B cell (primary cell): ENCODE measurements at regions of chr20 and their contacts with region 1.

Region 1: DNA sequence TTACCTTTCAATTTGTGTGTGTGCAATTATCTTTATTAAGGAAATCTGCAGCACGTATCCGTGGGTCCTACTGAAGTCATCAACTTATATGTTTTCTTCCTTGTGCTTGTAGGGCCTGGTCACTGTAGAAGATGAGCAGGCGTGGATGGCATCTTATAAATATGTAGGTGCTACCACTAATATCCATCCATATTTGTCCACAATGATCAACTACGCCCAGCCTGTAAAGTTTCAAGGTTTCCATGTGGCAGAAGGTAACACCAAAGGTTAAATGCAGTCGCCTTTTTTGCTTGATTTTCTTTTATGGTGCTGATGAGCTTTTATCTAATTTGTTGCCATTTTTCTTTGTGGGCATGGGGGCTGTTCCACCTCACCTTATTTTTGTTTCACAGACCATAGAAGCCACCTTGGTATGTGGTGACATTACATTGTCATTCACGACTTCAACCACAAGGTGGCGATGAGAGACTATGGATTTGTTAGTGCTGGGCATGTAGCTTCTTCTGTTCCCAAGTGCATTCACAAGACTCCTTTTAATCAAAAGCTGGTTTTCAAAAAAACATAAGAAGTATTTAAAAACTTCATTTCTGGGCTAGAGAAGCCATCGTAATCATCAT is 106.5 kb upstream of the LAMP5 start:
- DNase-seq: peak; percentile 61
- ATAC-seq: no peak
- H3K4me3 ChIP-seq: no peak overlapping the region
- H3K4me3 Mint-ChIP-seq: no peak overlapping the region
- H3K27ac ChIP-seq: no peak overlapping the region
- H3K27ac Mint-ChIP-seq: no peak overlapping the region
- H3K4me1 ChIP-seq: no peaks in the 10 kb centered on the region
- H3K4me1 Mint-ChIP-seq: peaks cover 7% of the 10 kb centered on the region
- H3K27me3 ChIP-seq: no peaks in the 10 kb centered on the region
- H3K27me3 Mint-ChIP-seq: peaks cover 10% of the 10 kb centered on the region
- CTCF ChIP-seq: peak; percentile 91

Region 2: GRCh38 chr20:9427430-9428291 is 19.7 kb after region 1 on chr20:
- CTCF ChIA-PET with region 1: interaction called, 44 read pairs
- POLR2A ChIA-PET with region 1: no interaction called
- intact Hi-C with region 1: no loop called
- DNase-seq: no peak
- ATAC-seq: no peak
- H3K4me3 ChIP-seq: no peak overlapping the region
- H3K4me3 Mint-ChIP-seq: no peak overlapping the region
- H3K27ac ChIP-seq: no peak overlapping the region
- H3K27ac Mint-ChIP-seq: no peak overlapping the region
- H3K4me1 ChIP-seq: peaks cover 0 to 2% of the 10 kb centered on the region in 2 donors
- H3K4me1 Mint-ChIP-seq: peaks cover 2% of the 10 kb centered on the region
- H3K27me3 ChIP-seq: no peaks in the 10 kb centered on the region
- H3K27me3 Mint-ChIP-seq: no peaks in the 10 kb centered on the region
- CTCF ChIP-seq: no peak

Region 3: GRCh38 chr20:9609887-9610502 is 202.1 kb after region 1 on chr20:
- CTCF ChIA-PET with region 1: interaction called, 20 read pairs
- POLR2A ChIA-PET with region 1: no interaction called
- intact Hi-C with region 1: no loop called
- DNase-seq: peak; percentile 56
- ATAC-seq: no peak
- H3K4me3 ChIP-seq: no peak overlapping the region
- H3K4me3 Mint-ChIP-seq: no peak overlapping the region
- H3K27ac ChIP-seq: no peak overlapping the region
- H3K27ac Mint-ChIP-seq: no peak overlapping the region
- H3K4me1 ChIP-seq: no peaks in the 10 kb centered on the region
- H3K4me1 Mint-ChIP-seq: no peaks in the 10 kb centered on the region
- H3K27me3 ChIP-seq: peaks cover 0 to 17% (median 5%) of the 10 kb centered on the region in 4 experiments
- H3K27me3 Mint-ChIP-seq: peaks cover 13% of the 10 kb centered on the region
- CTCF ChIP-seq: peak; percentile 74

Region 4: GRCh38 chr20:9912858-9913434 is 505.0 kb after region 1 on chr20:
- CTCF ChIA-PET with region 1: interaction called, 10 read pairs
- POLR2A ChIA-PET with region 1: no interaction called
- intact Hi-C with region 1: loop called (anchors 2 kb)
- DNase-seq: peak; percentile 38
- ATAC-seq: no peak
- H3K4me3 ChIP-seq: no peak overlapping the region
- H3K4me3 Mint-ChIP-seq: no peak overlapping the region
- H3K27ac ChIP-seq: no peak overlapping the region
- H3K27ac Mint-ChIP-seq: no peak overlapping the region
- H3K4me1 ChIP-seq: no peaks in the 10 kb centered on the region
- H3K4me1 Mint-ChIP-seq: no peaks in the 10 kb centered on the region
- H3K27me3 ChIP-seq: peaks cover 0 to 10% (median 5%) of the 10 kb centered on the region in 4 experiments
- H3K27me3 Mint-ChIP-seq: peaks cover 21% of the 10 kb centered on the region
- CTCF ChIP-seq: peak; percentile 88

Region 5: GRCh38 chr20:9978397-9979004 is 570.6 kb after region 1 on chr20:
- CTCF ChIA-PET with region 1: no interaction called
- POLR2A ChIA-PET with region 1: no interaction called
- intact Hi-C with region 1: no loop called
- DNase-seq: peak; percentile 73
- ATAC-seq: peak; percentile 70
- H3K4me3 ChIP-seq: no peak overlapping the region
- H3K4me3 Mint-ChIP-seq: no peak overlapping the region
- H3K27ac ChIP-seq: no peak overlapping the region
- H3K27ac Mint-ChIP-seq: no peak overlapping the region
- H3K4me1 ChIP-seq: no peaks in the 10 kb centered on the region
- H3K4me1 Mint-ChIP-seq: no peaks in the 10 kb centered on the region
- H3K27me3 ChIP-seq: peaks cover 0 to 5% (median 0%) of the 10 kb centered on the region in 4 experiments
- H3K27me3 Mint-ChIP-seq: peaks cover 10% of the 10 kb centered on the region
- CTCF ChIP-seq: peak; percentile 82

Region 6: DNA sequence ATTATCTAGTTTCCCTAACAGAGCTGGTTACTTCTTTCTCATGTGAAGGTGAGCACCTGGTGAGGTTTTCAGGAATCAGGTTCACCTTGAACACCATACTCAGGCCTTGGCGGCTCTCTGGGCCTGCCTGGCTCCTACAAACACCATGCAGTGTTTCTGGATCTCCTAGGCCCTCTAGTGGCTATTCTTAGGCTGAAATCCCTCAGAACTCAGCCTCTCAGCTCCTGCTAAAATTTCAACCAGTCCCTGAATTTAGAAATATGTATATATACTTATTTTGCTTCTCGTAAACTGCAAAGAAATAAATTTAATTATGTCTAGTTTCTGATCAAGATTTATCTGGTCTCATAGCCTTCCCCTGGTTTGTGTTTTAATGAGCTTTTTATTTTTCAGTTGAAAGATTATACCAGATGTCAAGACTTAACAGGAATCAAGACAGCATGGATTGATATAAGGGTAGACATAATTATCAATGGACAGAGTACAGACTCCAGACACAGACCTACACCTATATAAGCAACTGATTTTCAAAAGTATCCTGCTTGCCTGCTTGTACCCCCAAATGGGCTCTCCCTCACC is 682.8 kb after region 1 on chr20:
- CTCF ChIA-PET with region 1: interaction called, 18 read pairs
- POLR2A ChIA-PET with region 1: no interaction called
- intact Hi-C with region 1: no loop called
- DNase-seq: peak; percentile 54
- ATAC-seq: no peak
- H3K4me3 ChIP-seq: no peak overlapping the region
- H3K4me3 Mint-ChIP-seq: no peak overlapping the region
- H3K27ac ChIP-seq: no peak overlapping the region
- H3K27ac Mint-ChIP-seq: no peak overlapping the region
- H3K4me1 ChIP-seq: no peaks in the 10 kb centered on the region
- H3K4me1 Mint-ChIP-seq: no peaks in the 10 kb centered on the region
- H3K27me3 ChIP-seq: peaks cover 0 to 4% (median 1%) of the 10 kb centered on the region in 4 experiments
- H3K27me3 Mint-ChIP-seq: peaks cover 8% of the 10 kb centered on the region
- CTCF ChIP-seq: peak; percentile 74